Activated T-helper 1 cell treated with anti-CD3 and anti-CD28 coated beads, Interleukin-12 subunit alpha, Interleukin-12 subunit beta, Interleukin-2, Interleukin-4 antibody, amounts not matched to agents 30 ng/mL and 10 ng/mL and 1 ng/mL, durations not matched to agents 14 hours and 24 hours and 36 hours (primary cell): ENCODE measurements at regions of chr3 and their contacts with region 1.

Region 1: DNA sequence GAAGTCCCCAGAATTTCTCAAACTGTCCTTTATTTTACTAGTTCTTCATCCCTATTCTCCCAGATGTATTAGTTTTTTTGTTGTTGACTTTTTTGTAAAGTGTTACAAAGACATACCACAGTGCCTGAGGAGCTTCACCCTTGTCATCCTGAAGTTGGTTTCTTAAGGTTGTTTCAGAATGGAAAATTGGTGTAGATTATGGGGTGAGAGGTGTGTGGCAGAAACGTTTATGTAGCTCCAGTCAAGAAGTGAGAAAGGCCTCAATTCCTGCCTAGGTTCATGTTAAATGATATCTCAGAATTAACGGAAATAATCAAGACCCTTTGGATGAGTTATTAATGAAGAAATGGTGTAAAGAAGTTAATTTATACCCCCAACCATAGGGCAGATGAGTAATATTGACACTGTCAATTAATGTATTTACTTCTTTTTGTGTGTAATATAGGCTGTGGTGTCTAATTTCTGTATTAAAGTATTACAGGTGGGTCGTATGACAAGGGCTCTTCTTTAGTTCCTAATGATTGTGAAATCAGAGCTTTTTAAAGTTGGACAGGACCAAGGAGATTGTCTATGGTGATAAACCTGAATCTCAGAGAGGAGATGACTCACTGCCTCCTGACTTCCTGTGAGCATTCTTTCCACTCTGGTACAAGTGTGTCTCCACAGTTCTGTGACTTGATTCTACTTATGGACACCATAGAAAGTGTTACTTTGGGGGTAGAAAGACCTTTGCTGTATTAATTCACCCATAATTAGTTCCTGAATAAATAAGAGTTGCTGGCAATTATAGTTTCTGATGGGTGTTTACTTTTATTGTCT is 7.0 kb downstream of the EDEM1 start:
- DNase-seq: peak; percentile 54
- H3K4me3 Mint-ChIP-seq: peak overlapping the region; percentile 74
- H3K27ac Mint-ChIP-seq: peak overlapping the region; percentile 97
- H3K4me1 Mint-ChIP-seq: peaks cover 88% of the 10 kb centered on the region
- H3K27me3 Mint-ChIP-seq: no peaks in the 10 kb centered on the region

Region 2: GRCh38 chr3:4421121-4421520 is 773.4 kb before region 1 on chr3:
- intact Hi-C with region 1: loop called (anchors 1 kb)
- DNase-seq: no peak
- H3K4me3 Mint-ChIP-seq: peak overlapping the region; percentile 25
- H3K27ac Mint-ChIP-seq: peak overlapping the region; percentile 57
- H3K4me1 Mint-ChIP-seq: peaks cover 25% of the 10 kb centered on the region
- H3K27me3 Mint-ChIP-seq: no peaks in the 10 kb centered on the region

Region 3: GRCh38 chr3:4776980-4777581 is 417.5 kb before region 1 on chr3:
- intact Hi-C with region 1: loop called (anchors 1 kb)
- DNase-seq: peak; percentile 32
- H3K4me3 Mint-ChIP-seq: peak overlapping the region; percentile 73
- H3K27ac Mint-ChIP-seq: peak overlapping the region; percentile 98
- H3K4me1 Mint-ChIP-seq: peaks cover 82% of the 10 kb centered on the region
- H3K27me3 Mint-ChIP-seq: no peaks in the 10 kb centered on the region

Region 4: DNA sequence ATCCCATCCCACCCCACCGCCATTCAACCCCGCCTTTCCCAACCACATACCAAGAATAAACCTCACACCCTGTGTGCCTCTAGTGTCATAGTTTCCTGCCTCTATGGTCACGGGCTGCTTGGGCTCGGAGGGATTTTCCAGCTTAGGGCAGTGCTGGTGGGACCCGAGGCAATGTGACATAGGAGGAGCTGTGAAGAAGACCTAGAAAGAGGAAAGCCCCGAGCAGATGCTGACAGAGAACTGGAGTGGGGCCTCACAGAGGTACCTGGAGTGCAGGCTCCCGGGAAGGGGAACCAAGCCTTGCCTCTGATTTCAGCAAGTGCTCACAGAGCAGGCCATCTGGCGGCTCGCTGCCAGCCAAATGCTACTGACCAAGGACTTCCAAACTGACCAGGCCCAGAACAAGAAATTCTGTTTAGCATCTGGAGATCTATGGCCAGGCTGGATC is 187.8 kb before region 1 on chr3:
- intact Hi-C with region 1: loop called (anchors 5 kb)
- DNase-seq: peak; percentile 88
- H3K4me3 Mint-ChIP-seq: peak overlapping the region; percentile 71
- H3K27ac Mint-ChIP-seq: peak overlapping the region; percentile 89
- H3K4me1 Mint-ChIP-seq: peaks cover 72% of the 10 kb centered on the region
- H3K27me3 Mint-ChIP-seq: no peaks in the 10 kb centered on the region

Region 5: GRCh38 chr3:5122030-5122740 is 72.4 kb before region 1 on chr3 and contains the start of gene ARL8B:
- intact Hi-C with region 1: loop called (anchors 1 kb)
- DNase-seq: peak; percentile 90
- H3K4me3 Mint-ChIP-seq: peak within 1 kb of the TSS; percentile 88
- H3K27ac Mint-ChIP-seq: peak within 1 kb of the TSS; percentile 87
- H3K4me1 Mint-ChIP-seq: peaks cover 40% of the 10 kb centered on the region
- H3K27me3 Mint-ChIP-seq: no peaks in the 10 kb centered on the region
- total RNA-seq, gene ARL8B: 43.4 and 51.0 TPM in 2 replicates

Region 6: DNA sequence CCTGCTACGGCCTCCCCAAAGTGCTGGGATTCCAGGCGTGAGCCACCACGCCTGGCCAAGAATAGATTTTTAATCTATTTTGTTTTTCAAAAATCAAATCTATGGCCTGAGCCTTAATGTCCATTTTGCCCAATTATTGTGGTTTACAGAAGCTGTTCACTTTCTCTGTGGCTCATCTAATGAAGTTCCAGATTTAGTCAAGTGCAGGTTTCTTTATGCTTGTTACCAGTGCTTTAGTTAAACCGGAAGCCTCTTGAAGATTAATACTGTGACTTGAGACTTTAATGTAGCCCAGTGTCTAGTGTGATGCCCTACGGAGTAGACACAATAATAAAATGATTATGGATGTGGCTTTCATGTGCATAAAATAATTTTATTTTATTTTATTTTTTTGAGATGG is 23.6 kb before region 1 on chr3:
- intact Hi-C with region 1: no loop called
- DNase-seq: no peak
- H3K4me3 Mint-ChIP-seq: no peak overlapping the region
- H3K27ac Mint-ChIP-seq: no peak overlapping the region
- H3K4me1 Mint-ChIP-seq: peaks cover 7% of the 10 kb centered on the region
- H3K27me3 Mint-ChIP-seq: no peaks in the 10 kb centered on the region